OCI-LY7 (cell line): ENCODE measurements at regions of chr6 and their contacts with region 1.

Region 1: DNA sequence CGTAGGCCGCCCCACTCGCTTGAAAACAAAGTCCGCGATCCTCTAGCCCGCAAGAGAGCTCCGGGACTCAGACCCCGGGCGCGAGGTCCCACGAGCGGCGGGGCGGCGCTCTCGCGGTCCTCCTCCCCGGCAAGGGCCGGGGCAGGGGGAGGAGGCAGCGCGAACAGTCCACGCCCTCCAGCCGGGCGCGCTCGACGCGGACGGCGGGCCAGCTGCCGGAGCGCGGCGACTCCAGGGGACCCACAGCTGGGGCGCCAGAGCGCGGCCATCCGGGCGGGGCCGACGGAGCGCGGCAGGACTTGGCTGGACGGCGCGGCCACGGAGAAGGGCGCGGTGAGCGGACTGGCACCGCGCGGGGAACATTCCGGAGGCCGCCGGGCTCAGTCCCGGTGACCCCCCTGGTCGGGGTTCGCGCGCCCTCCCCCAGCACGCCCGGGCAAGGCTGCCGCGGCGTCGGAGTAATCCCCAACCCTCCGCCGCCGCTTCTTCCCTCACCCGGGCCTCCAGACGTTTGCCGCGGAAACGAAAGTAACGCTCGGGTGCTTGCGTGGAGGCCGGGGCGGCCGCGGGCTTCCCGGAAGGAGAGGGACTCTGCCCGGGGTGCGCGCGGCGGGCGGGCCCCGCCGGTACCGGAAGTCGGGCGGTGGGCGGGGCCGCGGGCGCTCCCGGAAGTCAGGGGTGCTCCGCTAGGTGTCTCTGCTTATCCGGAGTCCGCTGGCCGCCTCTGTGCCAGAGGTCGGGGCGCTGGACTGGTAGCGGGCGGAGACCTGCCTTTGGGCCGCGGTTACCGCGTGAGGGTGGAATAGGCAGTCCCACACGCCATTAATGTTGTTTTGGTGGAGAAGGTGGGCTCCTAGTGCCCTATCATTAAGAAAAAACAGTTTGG is at the start of gene RIPK1:
- DNase-seq: peak; percentile 94
- H3K4me3 ChIP-seq: peak within 1 kb of the TSS; percentile 86
- H3K27ac ChIP-seq: peak within 1 kb of the TSS; percentile 87
- H3K4me1 ChIP-seq: peaks cover 43% of the 10 kb centered on the region
- CTCF ChIP-seq: peak; percentile 64
- total RNA-seq, gene RIPK1: 6.1 and 7.5 TPM in 2 replicates

Region 2: GRCh38 chr6:2765166-2765895 is 303.2 kb before region 1 on chr6 and contains the start of gene WRNIP1:
- CTCF ChIA-PET with region 1: no interaction called
- POLR2A ChIA-PET with region 1: no interaction called
- intact Hi-C with region 1: loop called (anchors 2 kb)
- DNase-seq: peak; percentile 99
- H3K4me3 ChIP-seq: peak within 1 kb of the TSS; percentile 91
- H3K27ac ChIP-seq: peak within 1 kb of the TSS; percentile 73
- H3K4me1 ChIP-seq: peaks cover 26% of the 10 kb centered on the region
- CTCF ChIP-seq: peak; percentile 70
- total RNA-seq, gene WRNIP1: 38.1 and 54.2 TPM in 2 replicates

Region 3: GRCh38 chr6:3023663-3024483 is 44.7 kb before region 1 on chr6:
- CTCF ChIA-PET with region 1: no interaction called
- POLR2A ChIA-PET with region 1: interaction called, 8 read pairs
- intact Hi-C with region 1: loop called (anchors 5 kb)
- DNase-seq: peak; percentile 88
- H3K4me3 ChIP-seq: peak overlapping the region; percentile 61
- H3K27ac ChIP-seq: peak overlapping the region; percentile 95
- H3K4me1 ChIP-seq: peaks cover 62% of the 10 kb centered on the region
- CTCF ChIP-seq: no peak

Region 4: DNA sequence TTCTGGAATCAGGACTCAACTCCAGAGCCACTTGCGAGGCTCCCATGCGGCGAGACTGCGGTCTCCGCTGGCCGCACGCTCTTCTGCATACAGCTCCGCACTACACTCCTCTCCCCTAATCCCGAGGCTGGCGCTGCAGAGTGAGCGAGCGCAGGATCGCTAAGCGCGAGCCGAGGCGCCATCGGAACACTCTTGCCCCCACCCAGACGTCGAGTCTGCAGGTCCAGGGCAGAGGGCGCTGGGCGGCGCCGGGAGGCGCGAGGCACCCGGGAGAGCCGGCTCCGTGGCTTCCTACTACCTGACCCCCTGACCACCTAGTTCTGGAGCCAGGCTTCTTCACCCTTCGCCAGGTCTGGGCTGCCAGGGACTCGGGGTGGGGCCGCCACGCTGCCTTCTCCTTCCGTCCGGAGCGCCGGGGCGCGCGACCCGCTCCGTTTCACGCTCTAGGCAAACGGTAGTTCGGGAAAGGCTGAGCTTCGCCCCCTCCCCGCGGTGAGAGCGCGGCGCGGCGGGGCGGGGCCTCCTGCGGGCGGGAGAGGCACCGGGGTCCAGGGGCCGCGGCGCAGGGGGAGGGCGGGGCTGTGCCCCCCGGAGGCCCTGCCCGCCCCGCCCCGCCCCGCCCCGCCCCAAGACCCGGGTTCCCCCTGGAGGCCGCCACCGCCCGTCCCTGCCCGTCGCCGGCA is 94.1 kb after region 1 on chr6:
- CTCF ChIA-PET with region 1: no interaction called
- POLR2A ChIA-PET with region 1: interaction called, 5 read pairs
- intact Hi-C with region 1: loop called (anchors 1 kb)
- DNase-seq: peak; percentile 82
- H3K4me3 ChIP-seq: peak overlapping the region; percentile 83
- H3K27ac ChIP-seq: peak overlapping the region; percentile 78
- H3K4me1 ChIP-seq: peaks cover 43% of the 10 kb centered on the region
- CTCF ChIP-seq: peak; percentile 27; the same call in 1 of the 2 replicates

Region 5: GRCh38 chr6:3356056-3356761 is 287.6 kb after region 1 on chr6:
- CTCF ChIA-PET with region 1: no interaction called
- POLR2A ChIA-PET with region 1: interaction called, 4 read pairs
- intact Hi-C with region 1: loop called (anchors 2 kb)
- DNase-seq: peak; percentile 95
- H3K4me3 ChIP-seq: peak overlapping the region; percentile 66
- H3K27ac ChIP-seq: peak overlapping the region; percentile 84
- H3K4me1 ChIP-seq: peaks cover 57% of the 10 kb centered on the region
- CTCF ChIP-seq: no peak